Activated CD4-positive, alpha-beta T cell treated with anti-CD3 and anti-CD28 coated beads for 36 hours (primary cell): ENCODE measurements at regions of chr21 and their contacts with region 1.

Region 1: GRCh38 chr21:36589355-36589971 is 109.5 kb upstream of the SIM2 start:
- DNase-seq: peak; percentile 65
- ATAC-seq: peak; percentile 81
- H3K4me3 Mint-ChIP-seq: no peak overlapping the region
- H3K27ac Mint-ChIP-seq: no peak overlapping the region
- H3K4me1 Mint-ChIP-seq: peaks cover 5% of the 10 kb centered on the region
- H3K27me3 Mint-ChIP-seq: no peaks in the 10 kb centered on the region

Region 2: GRCh38 chr21:36419996-36420395 is 169.5 kb before region 1 on chr21:
- CTCF ChIA-PET with region 1: no interaction called
- POLR2A ChIA-PET with region 1: no interaction called
- intact Hi-C with region 1: loop called (anchors 2 kb)
- DNase-seq: peak; percentile 70
- ATAC-seq: peak; percentile 87
- H3K4me3 Mint-ChIP-seq: no peak overlapping the region
- H3K27ac Mint-ChIP-seq: no peak overlapping the region
- H3K4me1 Mint-ChIP-seq: peaks cover 2% of the 10 kb centered on the region
- H3K27me3 Mint-ChIP-seq: no peaks in the 10 kb centered on the region

Region 3: DNA sequence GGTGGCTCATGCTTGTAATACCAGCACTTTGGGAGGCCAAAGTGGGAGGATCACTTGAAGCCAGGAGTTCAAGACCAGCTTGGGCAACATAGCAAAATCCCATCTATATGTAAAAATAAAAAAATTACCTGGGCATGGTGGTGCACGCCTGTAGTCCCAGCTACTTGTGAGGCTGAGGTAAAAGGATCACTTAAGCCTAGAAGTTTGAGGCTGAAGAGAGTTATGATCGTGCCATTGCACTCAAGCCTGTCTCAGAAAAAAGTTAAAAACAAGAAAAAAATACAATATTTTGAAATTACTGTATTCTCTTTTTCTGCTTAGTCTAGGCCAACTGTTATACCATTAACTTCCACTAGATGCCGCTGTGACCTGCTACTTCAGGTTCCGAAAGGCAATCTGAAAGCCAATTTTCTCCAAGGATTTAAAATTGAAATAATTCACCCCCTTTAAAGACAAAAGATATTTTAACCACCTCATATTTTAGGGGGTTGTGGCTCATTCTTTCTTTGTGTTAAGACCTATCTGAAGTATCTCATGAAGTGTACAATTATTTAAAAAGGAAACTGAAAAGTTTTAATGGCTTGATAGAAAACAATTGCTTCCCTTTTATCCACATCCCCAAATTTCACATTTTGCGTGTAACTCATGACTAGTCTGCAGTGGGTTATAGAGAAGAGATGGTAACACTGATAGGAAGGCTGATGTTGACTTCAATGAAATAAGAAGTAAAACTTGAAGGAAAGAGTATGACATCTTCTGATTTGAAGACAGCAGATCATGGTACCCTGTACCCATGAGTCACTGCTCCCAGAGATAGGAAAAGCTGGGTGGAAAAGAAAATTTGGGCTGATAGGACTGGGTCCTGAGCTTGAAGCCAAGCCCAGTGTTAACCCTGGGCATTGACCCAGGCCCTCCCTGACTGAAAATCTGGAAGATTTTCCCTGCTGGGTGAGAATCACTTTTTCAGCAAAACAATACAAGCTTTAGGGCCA is 85.1 kb before region 1 on chr21:
- CTCF ChIA-PET with region 1: interaction called, 4 read pairs
- POLR2A ChIA-PET with region 1: no interaction called
- intact Hi-C with region 1: loop called (anchors 1 kb)
- DNase-seq: peak; percentile 61
- ATAC-seq: no peak
- H3K4me3 Mint-ChIP-seq: no peak overlapping the region
- H3K27ac Mint-ChIP-seq: no peak overlapping the region
- H3K4me1 Mint-ChIP-seq: no peaks in the 10 kb centered on the region
- H3K27me3 Mint-ChIP-seq: no peaks in the 10 kb centered on the region

Region 4: GRCh38 chr21:36640721-36641244 is 51.3 kb after region 1 on chr21:
- CTCF ChIA-PET with region 1: no interaction called
- POLR2A ChIA-PET with region 1: no interaction called
- intact Hi-C with region 1: no loop called
- DNase-seq: no peak
- ATAC-seq: no peak
- H3K4me3 Mint-ChIP-seq: no peak overlapping the region
- H3K27ac Mint-ChIP-seq: no peak overlapping the region
- H3K4me1 Mint-ChIP-seq: peaks cover 8% of the 10 kb centered on the region
- H3K27me3 Mint-ChIP-seq: peaks cover 5% of the 10 kb centered on the region

Region 5: DNA sequence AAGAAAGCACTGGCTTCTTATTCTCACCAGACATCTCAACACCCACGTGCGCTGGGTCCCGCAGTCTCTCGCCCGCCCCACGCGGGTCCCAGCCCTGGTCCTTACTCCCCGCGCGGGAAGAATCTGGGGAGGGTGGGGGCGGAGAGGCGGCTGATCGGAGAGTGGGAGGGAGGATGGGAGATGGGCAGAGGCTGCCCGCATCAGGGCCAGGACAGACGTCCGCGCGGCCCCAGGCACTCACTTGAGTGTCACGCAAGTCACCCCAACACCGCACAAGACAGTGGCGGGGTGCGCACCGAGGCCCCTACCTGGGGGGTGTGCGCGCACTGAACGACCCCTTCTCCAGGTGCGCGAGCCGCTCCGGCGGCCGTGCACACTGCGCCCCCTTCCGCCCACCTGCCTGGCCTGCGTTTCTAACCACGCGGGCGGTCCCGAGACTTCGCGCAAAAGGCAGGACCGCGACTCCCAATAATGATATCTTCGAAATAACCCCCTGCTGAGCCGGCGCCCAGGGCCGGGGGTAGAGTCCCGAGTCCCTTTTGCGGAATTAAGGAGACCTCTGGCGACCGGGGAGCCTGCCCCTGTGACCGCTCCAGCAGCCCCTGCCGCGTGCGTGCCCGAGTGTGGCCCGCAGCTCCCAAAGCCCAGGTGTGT is 103.5 kb after region 1 on chr21:
- CTCF ChIA-PET with region 1: no interaction called
- POLR2A ChIA-PET with region 1: no interaction called
- intact Hi-C with region 1: no loop called
- DNase-seq: peak; percentile 26
- ATAC-seq: no peak
- H3K4me3 Mint-ChIP-seq: no peak overlapping the region
- H3K27ac Mint-ChIP-seq: no peak overlapping the region
- H3K4me1 Mint-ChIP-seq: peaks cover 9% of the 10 kb centered on the region
- H3K27me3 Mint-ChIP-seq: peaks cover 77% of the 10 kb centered on the region